B cell (primary cell): ENCODE measurements at regions of chr3 and their contacts with region 1.

Region 1: DNA sequence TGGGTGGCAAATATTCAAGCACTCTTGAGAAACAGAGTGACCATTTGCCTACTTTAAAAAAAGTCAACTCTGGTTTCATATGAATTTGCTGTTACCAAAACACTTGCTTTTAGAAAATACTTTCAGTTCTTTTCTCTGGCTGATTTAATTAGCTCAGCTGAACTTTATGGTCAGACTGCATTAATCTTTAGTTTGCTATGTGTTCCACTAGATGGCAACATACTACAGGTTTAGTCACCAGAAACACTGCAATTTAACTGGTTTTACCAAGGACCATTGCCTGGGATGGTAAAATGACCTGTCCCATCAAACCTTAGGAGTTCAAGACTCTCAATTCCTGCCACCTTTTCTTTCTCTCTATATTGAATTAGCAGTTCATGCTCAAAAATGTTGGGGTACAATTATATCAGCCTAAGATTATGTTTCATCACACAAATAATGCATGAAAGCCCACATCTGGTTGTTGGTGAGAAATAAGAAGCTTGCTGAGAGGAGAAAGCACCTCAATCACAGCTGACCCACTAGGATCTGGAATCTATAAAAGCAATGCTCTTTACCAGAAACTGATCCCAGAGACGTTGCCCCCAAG is 14.2 kb downstream of the EIF4E3 start:
- DNase-seq: peak; percentile 56
- ATAC-seq: peak; percentile 21
- H3K4me3 ChIP-seq: no peak overlapping the region
- H3K4me3 Mint-ChIP-seq: no peak overlapping the region
- H3K27ac ChIP-seq: no peak overlapping the region
- H3K27ac Mint-ChIP-seq: no peak overlapping the region
- H3K4me1 ChIP-seq: no peaks in the 10 kb centered on the region
- H3K4me1 Mint-ChIP-seq: no peaks in the 10 kb centered on the region
- H3K27me3 ChIP-seq: peaks cover 0 to 3% (median 0%) of the 10 kb centered on the region in 4 experiments
- H3K27me3 Mint-ChIP-seq: no peaks in the 10 kb centered on the region
- CTCF ChIP-seq: peak; percentile 77

Region 2: GRCh38 chr3:71657831-71658530 is 53.0 kb before region 1 on chr3:
- CTCF ChIA-PET with region 1: no interaction called
- POLR2A ChIA-PET with region 1: no interaction called
- intact Hi-C with region 1: no loop called
- DNase-seq: no peak
- ATAC-seq: no peak
- H3K4me3 ChIP-seq: no peak overlapping the region
- H3K4me3 Mint-ChIP-seq: no peak overlapping the region
- H3K27ac ChIP-seq: no peak overlapping the region
- H3K27ac Mint-ChIP-seq: no peak overlapping the region
- H3K4me1 ChIP-seq: no peaks in the 10 kb centered on the region
- H3K4me1 Mint-ChIP-seq: no peaks in the 10 kb centered on the region
- H3K27me3 ChIP-seq: no peaks in the 10 kb centered on the region
- H3K27me3 Mint-ChIP-seq: no peaks in the 10 kb centered on the region
- CTCF ChIP-seq: no peak

Region 3: DNA sequence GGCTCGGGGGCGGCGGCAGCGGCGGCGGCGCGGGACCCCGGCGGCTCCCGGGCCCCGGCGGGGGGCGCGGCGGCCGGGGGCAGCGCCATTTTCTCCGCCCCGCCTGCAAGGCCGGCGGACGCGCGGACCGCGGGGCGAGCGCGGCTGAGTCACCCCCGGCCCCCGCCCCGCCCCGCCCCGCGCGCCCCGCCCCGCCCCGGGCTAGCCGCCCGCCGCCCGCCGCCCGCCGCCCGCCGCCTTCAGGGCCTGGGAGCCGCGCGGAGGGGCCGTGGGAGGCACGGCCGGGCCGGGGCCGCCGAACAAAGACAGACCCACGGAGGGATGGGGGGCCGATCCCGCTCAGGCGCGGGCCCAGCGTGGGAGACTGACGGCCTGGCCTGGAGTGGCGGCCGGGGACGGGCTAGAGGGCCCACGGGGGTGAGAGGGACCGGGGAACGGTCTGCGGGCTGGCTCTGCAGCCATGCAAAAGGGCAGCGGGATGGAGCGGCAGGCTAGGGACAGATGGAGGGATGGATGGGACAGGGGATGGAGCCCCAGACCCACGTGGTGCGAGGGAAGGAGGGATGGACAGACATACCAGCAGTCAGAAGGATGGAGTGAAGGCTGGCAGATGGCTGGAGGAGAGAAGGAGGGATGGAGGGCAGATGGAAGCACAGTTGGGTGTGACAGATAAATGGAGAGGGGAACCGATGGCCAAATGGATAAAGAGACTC is 14.4 kb after region 1 on chr3 and contains the start of gene EIF4E3:
- CTCF ChIA-PET with region 1: interaction called, 22 read pairs
- POLR2A ChIA-PET with region 1: no interaction called
- intact Hi-C with region 1: no loop called
- DNase-seq: peak; percentile 51
- ATAC-seq: peak; percentile 73
- H3K4me3 ChIP-seq: peak within 1 kb of the TSS; percentile 59 to 71 (median 68)
- H3K4me3 Mint-ChIP-seq: peak within 1 kb of the TSS; percentile 82
- H3K27ac ChIP-seq: no peak within 1 kb of the TSS
- H3K27ac Mint-ChIP-seq: peak within 1 kb of the TSS; percentile 43
- H3K4me1 ChIP-seq: peaks cover 29% of the 10 kb centered on the region in 2 donors
- H3K4me1 Mint-ChIP-seq: peaks cover 43% of the 10 kb centered on the region
- H3K27me3 ChIP-seq: peaks cover 0 to 27% (median 0%) of the 10 kb centered on the region in 4 experiments
- H3K27me3 Mint-ChIP-seq: peaks cover 8% of the 10 kb centered on the region
- CTCF ChIP-seq: no peak
- total RNA-seq, gene EIF4E3: 4.2 and 5.0 TPM in 2 replicates

Region 4: DNA sequence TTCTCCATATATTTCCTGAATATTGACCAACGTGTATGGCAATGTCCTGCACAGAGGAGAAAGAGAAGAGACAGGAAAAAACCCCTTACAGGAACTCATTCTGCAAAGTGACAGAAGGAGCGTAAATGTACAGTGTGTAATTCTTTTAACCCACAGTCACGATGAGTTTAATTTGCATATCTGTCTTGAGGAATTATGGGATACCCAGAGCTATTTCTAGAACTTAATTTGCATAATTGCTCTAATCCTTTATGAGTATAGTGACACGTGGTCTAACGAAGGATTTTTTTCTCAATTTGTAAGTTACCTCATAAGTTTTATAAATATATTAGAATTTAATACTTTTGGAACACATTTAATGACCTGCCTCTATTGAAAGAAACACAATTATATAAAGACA is 52.4 kb after region 1 on chr3:
- CTCF ChIA-PET with region 1: no interaction called
- POLR2A ChIA-PET with region 1: no interaction called
- intact Hi-C with region 1: no loop called
- DNase-seq: no peak
- ATAC-seq: no peak
- H3K4me3 ChIP-seq: no peak overlapping the region
- H3K4me3 Mint-ChIP-seq: no peak overlapping the region
- H3K27ac ChIP-seq: no peak overlapping the region
- H3K27ac Mint-ChIP-seq: no peak overlapping the region
- H3K4me1 ChIP-seq: no peaks in the 10 kb centered on the region
- H3K4me1 Mint-ChIP-seq: no peaks in the 10 kb centered on the region
- H3K27me3 ChIP-seq: peaks cover 0 to 14% (median 3%) of the 10 kb centered on the region in 4 experiments
- H3K27me3 Mint-ChIP-seq: peaks cover 29% of the 10 kb centered on the region
- CTCF ChIP-seq: no peak

Region 5: DNA sequence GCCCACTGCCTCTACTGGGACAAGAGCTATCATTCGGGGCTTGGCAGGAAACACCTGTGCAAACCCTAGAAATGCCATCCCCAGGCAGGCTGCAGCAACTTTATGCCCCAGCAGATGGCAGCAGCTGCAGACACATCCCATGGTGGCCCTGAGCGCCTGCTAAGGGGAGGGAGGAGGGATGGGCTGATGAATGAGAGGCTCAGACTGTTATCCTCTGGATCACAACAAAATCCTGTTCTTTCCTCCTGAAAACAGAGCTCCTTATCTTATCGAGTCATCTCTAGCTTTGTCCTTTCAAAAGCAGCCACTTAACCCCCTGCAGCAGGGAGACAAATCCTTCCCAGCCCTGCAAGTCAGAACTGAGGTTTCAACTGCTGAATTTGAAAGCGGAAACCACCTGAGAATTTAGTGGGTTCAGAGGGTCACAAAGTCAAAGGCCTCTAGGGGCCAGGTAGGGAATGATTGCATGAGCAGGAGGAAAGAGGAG is 164.5 kb after region 1 on chr3:
- CTCF ChIA-PET with region 1: interaction called, 8 read pairs
- POLR2A ChIA-PET with region 1: no interaction called
- intact Hi-C with region 1: loop called (anchors 1 kb)
- DNase-seq: peak; percentile 88
- ATAC-seq: peak; percentile 99
- H3K4me3 ChIP-seq: no peak overlapping the region
- H3K4me3 Mint-ChIP-seq: no peak overlapping the region
- H3K27ac ChIP-seq: no peak overlapping the region
- H3K27ac Mint-ChIP-seq: no peak overlapping the region
- H3K4me1 ChIP-seq: peaks cover 5 to 10% of the 10 kb centered on the region in 2 donors
- H3K4me1 Mint-ChIP-seq: peaks cover 17% of the 10 kb centered on the region
- H3K27me3 ChIP-seq: peaks cover 0 to 30% (median 20%) of the 10 kb centered on the region in 4 experiments
- H3K27me3 Mint-ChIP-seq: peaks cover 42% of the 10 kb centered on the region
- CTCF ChIP-seq: peak; percentile 88

Region 6: GRCh38 chr3:71942432-71943187 is 231.6 kb after region 1 on chr3:
- CTCF ChIA-PET with region 1: no interaction called
- POLR2A ChIA-PET with region 1: no interaction called
- intact Hi-C with region 1: no loop called
- DNase-seq: no peak
- ATAC-seq: no peak
- H3K4me3 ChIP-seq: no peak overlapping the region
- H3K4me3 Mint-ChIP-seq: no peak overlapping the region
- H3K27ac ChIP-seq: no peak overlapping the region
- H3K27ac Mint-ChIP-seq: no peak overlapping the region
- H3K4me1 ChIP-seq: no peaks in the 10 kb centered on the region
- H3K4me1 Mint-ChIP-seq: peaks cover 3% of the 10 kb centered on the region
- H3K27me3 ChIP-seq: peaks cover 0 to 35% (median 12%) of the 10 kb centered on the region in 4 experiments
- H3K27me3 Mint-ChIP-seq: peaks cover 44% of the 10 kb centered on the region
- CTCF ChIP-seq: no peak

Region 7: GRCh38 chr3:72938471-72939265 is 1227.7 kb after region 1 on chr3:
- CTCF ChIA-PET with region 1: no interaction called
- POLR2A ChIA-PET with region 1: no interaction called
- intact Hi-C with region 1: loop called (anchors 10 kb)
- DNase-seq: peak; percentile 59
- ATAC-seq: peak; percentile 64
- H3K4me3 ChIP-seq: no peak overlapping the region
- H3K4me3 Mint-ChIP-seq: no peak overlapping the region
- H3K27ac ChIP-seq: no peak overlapping the region
- H3K27ac Mint-ChIP-seq: no peak overlapping the region
- H3K4me1 ChIP-seq: no peaks in the 10 kb centered on the region
- H3K4me1 Mint-ChIP-seq: no peaks in the 10 kb centered on the region
- H3K27me3 ChIP-seq: peaks cover 0 to 3% (median 3%) of the 10 kb centered on the region in 4 experiments
- H3K27me3 Mint-ChIP-seq: peaks cover 17% of the 10 kb centered on the region
- CTCF ChIP-seq: peak; percentile 75

Region 8: DNA sequence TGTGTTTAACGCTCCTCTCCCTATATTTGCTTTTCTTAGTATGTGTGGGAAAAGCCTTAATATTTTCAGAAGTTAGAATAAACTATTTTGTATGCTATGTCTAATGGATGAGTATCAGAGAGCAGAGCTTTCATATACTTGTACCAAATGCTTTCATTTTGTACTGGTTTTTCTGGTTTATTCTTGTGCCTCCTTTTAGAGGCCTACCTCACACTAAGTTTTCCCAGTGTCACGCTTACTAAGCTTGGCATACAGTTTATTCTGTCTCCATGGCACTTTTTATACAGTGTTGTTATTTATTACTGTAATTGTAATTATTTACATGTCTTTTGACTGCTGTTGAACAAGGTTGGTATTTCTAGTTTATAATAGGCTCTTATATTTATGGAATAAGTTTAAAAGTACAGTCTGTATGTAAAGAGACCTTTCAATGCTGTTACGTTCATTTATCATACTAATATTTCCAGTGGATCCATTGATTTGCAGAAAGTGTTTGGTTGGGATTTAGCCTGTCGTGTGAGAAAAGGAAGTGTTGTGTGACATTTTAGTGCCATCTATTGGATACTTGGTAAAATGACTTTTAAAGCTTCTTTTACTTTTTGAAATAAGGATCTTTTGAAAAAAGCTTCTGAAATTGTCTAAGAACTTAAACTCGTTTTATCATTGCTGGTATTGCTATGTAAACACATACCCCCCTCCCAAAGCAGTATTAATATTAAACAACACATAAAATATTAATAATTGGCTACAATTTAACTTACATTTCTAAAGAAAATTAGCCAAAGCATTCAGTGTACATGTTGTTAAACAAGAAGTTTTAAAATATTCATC is 1345.2 kb after region 1 on chr3:
- CTCF ChIA-PET with region 1: interaction called, 4 read pairs
- POLR2A ChIA-PET with region 1: no interaction called
- intact Hi-C with region 1: loop called (anchors 10 kb)
- DNase-seq: peak; percentile 31
- ATAC-seq: no peak
- H3K4me3 ChIP-seq: no peak overlapping the region
- H3K4me3 Mint-ChIP-seq: no peak overlapping the region
- H3K27ac ChIP-seq: no peak overlapping the region
- H3K27ac Mint-ChIP-seq: no peak overlapping the region
- H3K4me1 ChIP-seq: no peaks in the 10 kb centered on the region
- H3K4me1 Mint-ChIP-seq: peaks cover 4% of the 10 kb centered on the region
- H3K27me3 ChIP-seq: no peaks in the 10 kb centered on the region
- H3K27me3 Mint-ChIP-seq: no peaks in the 10 kb centered on the region
- CTCF ChIP-seq: peak; percentile 83